CD8-positive, alpha-beta T cell (primary cell): ENCODE measurements at regions of chr3 and their contacts with region 1.

Region 1: DNA sequence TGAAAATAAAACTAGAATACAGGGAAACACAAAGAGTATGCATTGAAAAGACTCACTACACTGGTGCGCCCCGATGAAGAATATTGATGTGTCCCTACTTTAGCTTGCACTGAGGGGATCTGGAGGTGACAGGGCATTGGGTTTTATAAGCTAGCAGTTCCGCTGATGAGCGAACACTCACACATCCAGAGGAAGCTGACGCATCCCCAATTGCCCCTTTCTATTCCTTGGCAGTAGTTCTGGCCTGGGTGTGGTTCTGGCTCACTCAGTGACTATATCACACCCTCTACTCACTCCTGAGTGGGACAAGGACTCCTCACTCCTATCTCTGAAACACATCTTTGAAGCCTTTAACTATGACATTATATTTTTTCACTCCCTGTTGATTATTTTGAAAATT is 71.0 kb downstream of the B3GNT5 start:
- DNase-seq: no peak
- ATAC-seq: no peak
- H3K4me3 ChIP-seq: no peak overlapping the region
- H3K4me3 Mint-ChIP-seq: no peak overlapping the region
- H3K27ac ChIP-seq: no peak overlapping the region
- H3K27ac Mint-ChIP-seq: no peak overlapping the region
- H3K4me1 ChIP-seq: peaks cover 8% of the 10 kb centered on the region
- H3K4me1 Mint-ChIP-seq: peaks cover 6% of the 10 kb centered on the region
- H3K27me3 ChIP-seq: no peaks in the 10 kb centered on the region
- H3K27me3 Mint-ChIP-seq: no peaks in the 10 kb centered on the region
- CTCF ChIP-seq: no peak

Region 2: DNA sequence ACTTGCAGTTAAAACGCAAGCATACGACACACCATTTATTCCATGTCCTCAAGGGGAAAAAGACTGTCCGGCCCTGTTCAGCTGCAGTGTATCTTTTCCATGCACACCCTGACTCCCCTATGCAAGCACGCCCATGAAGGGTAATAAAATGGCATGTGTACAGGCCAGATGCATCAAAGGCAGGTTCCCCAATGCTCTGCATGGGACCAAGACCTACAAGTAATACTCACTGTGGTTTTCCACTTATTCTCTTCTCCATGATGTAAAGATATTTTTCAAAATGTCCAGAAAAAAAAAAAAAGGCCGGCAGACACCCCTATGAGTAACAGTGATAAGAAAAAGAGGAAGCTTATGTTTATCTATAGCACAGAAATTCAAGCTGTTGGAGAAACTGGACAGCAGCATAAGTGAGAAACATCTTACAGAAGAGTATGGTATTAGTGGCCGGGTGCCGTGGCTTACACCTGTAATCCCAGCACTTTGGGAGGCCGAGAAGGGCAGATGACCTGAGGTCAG is 33.5 kb after region 1 on chr3:
- CTCF ChIA-PET with region 1: no interaction called
- POLR2A ChIA-PET with region 1: no interaction called
- intact Hi-C with region 1: loop called in 1 of 2 experiments (anchors 5 kb)
- DNase-seq: no peak
- ATAC-seq: no peak
- H3K4me3 ChIP-seq: no peak overlapping the region
- H3K4me3 Mint-ChIP-seq: no peak overlapping the region
- H3K27ac ChIP-seq: no peak overlapping the region
- H3K27ac Mint-ChIP-seq: no peak overlapping the region
- H3K4me1 ChIP-seq: no peaks in the 10 kb centered on the region
- H3K4me1 Mint-ChIP-seq: no peaks in the 10 kb centered on the region
- H3K27me3 ChIP-seq: no peaks in the 10 kb centered on the region
- H3K27me3 Mint-ChIP-seq: peaks cover 3% of the 10 kb centered on the region
- CTCF ChIP-seq: no peak

Region 3: GRCh38 chr3:183745300-183746098 is 421.4 kb after region 1 on chr3:
- CTCF ChIA-PET with region 1: no interaction called
- POLR2A ChIA-PET with region 1: no interaction called
- intact Hi-C with region 1: no loop called
- DNase-seq: no peak
- ATAC-seq: no peak
- H3K4me3 ChIP-seq: no peak overlapping the region
- H3K4me3 Mint-ChIP-seq: no peak overlapping the region
- H3K27ac ChIP-seq: no peak overlapping the region
- H3K27ac Mint-ChIP-seq: peak overlapping the region; percentile 10
- H3K4me1 ChIP-seq: no peaks in the 10 kb centered on the region
- H3K4me1 Mint-ChIP-seq: no peaks in the 10 kb centered on the region
- H3K27me3 ChIP-seq: no peaks in the 10 kb centered on the region
- H3K27me3 Mint-ChIP-seq: no peaks in the 10 kb centered on the region
- CTCF ChIP-seq: no peak